ENCODE measurements at regions of chr6 and their contacts with region 1.

Region 1: GRCh38 chr6:107657755-107658461 is 166.2 kb downstream of the SCML4 start:
- DNase-seq: peak; percentile 94
- ATAC-seq: peak; percentile 93
- H3K4me3 Mint-ChIP-seq: peak overlapping the region; percentile 75
- H3K27ac Mint-ChIP-seq: peak overlapping the region; percentile 97
- H3K4me1 Mint-ChIP-seq: peaks cover 45% of the 10 kb centered on the region
- H3K27me3 Mint-ChIP-seq: peaks cover 3% of the 10 kb centered on the region

Region 2: GRCh38 chr6:107318100-107318736 is 339.7 kb before region 1 on chr6:
- CTCF ChIA-PET with region 1: interaction called, 28 read pairs
- DNase-seq: peak; percentile 61
- ATAC-seq: peak; percentile 80
- H3K4me3 Mint-ChIP-seq: no peak overlapping the region
- H3K27ac Mint-ChIP-seq: no peak overlapping the region
- H3K4me1 Mint-ChIP-seq: peaks cover 7% of the 10 kb centered on the region
- H3K27me3 Mint-ChIP-seq: no peaks in the 10 kb centered on the region

Region 3: DNA sequence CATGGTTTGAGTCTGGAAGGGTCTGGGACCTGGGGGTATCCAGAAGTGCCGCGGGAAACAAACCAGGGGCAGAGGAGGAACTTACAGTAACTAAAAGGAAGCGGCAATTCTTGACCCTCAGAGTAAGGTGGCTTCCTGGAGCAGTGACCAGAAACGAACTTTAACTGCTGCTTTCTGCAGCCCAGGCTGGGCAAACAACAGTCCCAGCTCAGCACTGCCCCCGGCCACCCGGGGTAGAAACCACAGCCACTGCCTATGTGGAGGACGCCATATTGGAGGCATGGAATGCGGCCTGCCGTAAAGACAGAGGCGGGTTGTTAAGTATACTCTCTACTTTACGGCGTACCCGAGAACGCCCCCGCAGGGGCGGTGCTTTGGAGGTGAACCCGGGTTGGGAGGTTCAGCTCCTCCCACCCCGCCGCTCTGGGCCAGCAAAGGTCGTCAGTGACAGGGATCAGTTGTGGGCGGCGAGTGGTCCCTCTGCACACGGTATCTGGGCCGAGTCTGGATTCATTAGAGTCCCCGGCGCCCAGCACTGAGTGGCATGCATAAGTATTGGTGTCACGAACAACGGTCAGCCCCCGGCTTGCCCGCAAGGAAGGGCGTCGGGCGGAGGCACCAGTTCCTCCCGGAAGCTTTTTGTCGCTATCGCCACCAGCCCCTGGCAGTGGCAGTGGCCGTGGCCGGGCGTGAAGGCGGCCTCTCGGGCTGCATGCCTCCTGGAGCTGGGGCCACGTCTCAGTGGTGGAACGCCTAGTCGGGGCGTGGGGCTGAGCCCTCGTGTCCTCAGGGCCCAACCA is 198.4 kb before region 1 on chr6 and contains the start of gene PDSS2:
- CTCF ChIA-PET with region 1: interaction called, 10 read pairs
- DNase-seq: peak; percentile 99
- ATAC-seq: peak; percentile 97
- H3K4me3 Mint-ChIP-seq: peak within 1 kb of the TSS; percentile 90
- H3K27ac Mint-ChIP-seq: peak within 1 kb of the TSS; percentile 96
- H3K4me1 Mint-ChIP-seq: peaks cover 11% of the 10 kb centered on the region
- H3K27me3 Mint-ChIP-seq: no peaks in the 10 kb centered on the region
- total RNA-seq, gene PDSS2: 13.1 to 16.9 TPM

Region 4: DNA sequence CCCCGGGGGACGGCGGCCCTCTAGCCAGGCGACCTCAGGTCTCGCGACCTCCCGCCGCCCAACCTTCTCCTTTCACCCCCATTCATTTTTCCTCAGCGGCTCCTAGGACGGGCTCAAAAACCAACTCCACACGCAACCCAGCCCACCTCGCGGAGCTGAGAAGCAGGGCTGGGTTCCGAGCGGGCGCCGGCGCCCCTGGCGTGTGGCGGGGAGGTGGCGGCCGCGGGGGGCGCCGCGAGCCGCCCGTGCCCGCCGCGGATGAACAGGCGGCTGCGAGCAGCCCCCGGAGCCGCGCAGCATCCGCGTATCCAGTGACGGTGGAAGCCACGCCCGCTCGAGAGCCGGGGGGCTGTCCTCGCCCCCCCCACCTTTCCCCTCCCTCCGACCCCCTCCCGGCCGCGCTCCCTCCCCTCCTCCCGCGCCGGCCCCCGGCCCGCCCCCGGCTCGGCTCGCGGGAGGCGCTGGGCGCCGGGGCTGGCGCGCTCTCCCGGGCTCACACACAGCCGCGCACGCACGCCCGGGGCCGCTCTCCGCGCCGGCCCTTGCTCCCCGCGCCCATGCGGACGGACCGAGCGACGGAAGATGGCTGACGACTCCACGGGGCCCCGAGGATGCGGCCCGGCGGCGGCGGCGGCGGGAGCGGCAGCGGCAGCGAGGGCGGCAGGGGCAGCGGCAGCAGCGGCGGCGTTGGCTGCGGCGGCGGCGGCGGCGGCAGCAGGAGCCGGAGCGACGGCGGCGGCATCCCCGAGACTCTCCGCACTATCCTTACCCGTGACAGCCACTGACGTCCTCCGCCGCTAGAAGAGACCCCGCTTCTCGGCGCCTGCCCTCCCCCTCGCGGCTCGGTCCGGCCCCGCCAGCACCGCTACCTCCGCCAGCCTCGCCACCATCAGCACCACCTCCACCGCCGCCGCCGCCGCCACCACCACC is 168.0 kb before region 1 on chr6 and contains the start of gene SOBP:
- CTCF ChIA-PET with region 1: interaction called, 10 read pairs
- DNase-seq: peak; percentile 51
- ATAC-seq: peak; percentile 64
- H3K4me3 Mint-ChIP-seq: peak within 1 kb of the TSS; percentile 79
- H3K27ac Mint-ChIP-seq: no peak within 1 kb of the TSS
- H3K4me1 Mint-ChIP-seq: peaks cover 20% of the 10 kb centered on the region
- H3K27me3 Mint-ChIP-seq: peaks cover 43% of the 10 kb centered on the region
- total RNA-seq, gene SOBP: 0.70 to 2.0 TPM

Region 5: DNA sequence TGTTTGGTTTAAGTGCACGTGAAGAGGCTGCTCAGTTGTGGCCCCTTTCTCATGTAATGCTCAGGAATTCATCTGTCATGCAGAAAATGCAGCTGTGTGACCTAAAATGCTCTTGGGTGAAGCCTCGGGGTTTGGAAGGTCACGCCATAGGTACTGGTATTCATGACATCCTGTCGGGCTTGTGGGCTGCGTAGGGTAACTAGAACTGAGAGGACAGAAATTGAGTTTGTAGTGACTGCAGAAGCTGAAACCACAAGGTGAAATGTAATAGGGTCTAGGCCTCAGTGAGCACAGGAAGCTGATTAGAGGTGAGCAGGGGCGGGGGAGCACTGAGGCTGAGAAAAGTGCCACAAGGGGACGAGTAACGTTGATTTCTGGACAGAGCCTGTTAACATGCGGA is 39.2 kb before region 1 on chr6:
- CTCF ChIA-PET with region 1: interaction called, 27 read pairs
- DNase-seq: peak; percentile 92
- ATAC-seq: peak; percentile 98
- H3K4me3 Mint-ChIP-seq: peak overlapping the region; percentile 1
- H3K27ac Mint-ChIP-seq: peak overlapping the region; percentile 82
- H3K4me1 Mint-ChIP-seq: peaks cover 35% of the 10 kb centered on the region
- H3K27me3 Mint-ChIP-seq: peaks cover 3% of the 10 kb centered on the region

Region 6: GRCh38 chr6:107674995-107675738 is 17.3 kb after region 1 on chr6:
- CTCF ChIA-PET with region 1: interaction called, 23 read pairs
- DNase-seq: peak; percentile 93
- ATAC-seq: peak; percentile 99
- H3K4me3 Mint-ChIP-seq: peak overlapping the region; percentile 50
- H3K27ac Mint-ChIP-seq: peak overlapping the region; percentile 88
- H3K4me1 Mint-ChIP-seq: peaks cover 21% of the 10 kb centered on the region
- H3K27me3 Mint-ChIP-seq: peaks cover 2% of the 10 kb centered on the region